A549 (cell line): ENCODE measurements at regions of chr3 and their contacts with region 1.

Region 1: GRCh38 chr3:150721285-150722130 is 17.8 kb upstream of the ERICH6 start:
- DNase-seq: peak; percentile 65 to 75
- ATAC-seq: peak; percentile 71 to 86; a peak in 5 of 6 replicates
- H3K4me3 ChIP-seq: no peak overlapping the region
- H3K27ac ChIP-seq: no peak overlapping the region
- H3K4me1 ChIP-seq: no peaks in the 10 kb centered on the region; the same call in 2 of the 3 replicates
- CTCF ChIP-seq: peak; percentile 85
- EP300 ChIP-seq: no peak
- POLR2A ChIP-seq: no peak
- RAD21 ChIP-seq: peak; percentile 84 to 89

Region 2: DNA sequence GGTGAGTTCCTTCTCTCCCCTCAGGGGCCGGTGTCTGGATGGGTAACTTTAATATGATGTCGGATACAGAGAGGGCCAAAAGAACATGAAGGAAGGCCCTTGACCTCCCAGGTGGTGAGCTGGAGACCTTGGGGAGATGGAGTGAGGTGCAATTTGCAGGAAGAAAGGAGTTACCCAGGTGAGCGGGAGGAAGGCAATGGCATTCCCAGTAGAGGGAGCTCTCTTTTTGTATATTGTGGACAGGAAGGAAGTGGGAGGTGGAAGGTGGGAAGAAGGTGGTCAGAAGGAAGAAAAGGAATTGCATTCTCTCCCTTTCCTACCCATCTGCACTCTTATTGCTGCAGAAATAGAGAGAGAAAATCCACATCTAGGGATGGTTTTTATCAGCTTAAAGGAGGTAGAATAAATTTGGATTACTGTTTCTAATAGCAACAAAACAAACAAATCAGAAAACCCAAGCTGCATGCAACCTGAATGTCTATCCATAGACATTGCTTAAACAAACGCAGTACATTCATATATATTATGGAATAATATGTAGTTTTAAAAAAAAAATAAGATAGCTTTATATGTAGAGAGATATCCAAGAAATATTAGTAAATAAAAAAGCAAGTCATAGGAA is 482.4 kb before region 1 on chr3:
- CTCF ChIA-PET with region 1: no interaction called
- POLR2A ChIA-PET with region 1: no interaction called
- DNase-seq: peak; percentile 41 to 68
- ATAC-seq: peak; percentile 77 to 94; a peak in 3 of 6 replicates
- H3K4me3 ChIP-seq: no peak overlapping the region
- H3K27ac ChIP-seq: no peak overlapping the region
- H3K4me1 ChIP-seq: peaks cover 6% of the 10 kb centered on the region; the same call in 1 of the 3 replicates
- CTCF ChIP-seq: peak; percentile 83
- EP300 ChIP-seq: no peak
- POLR2A ChIP-seq: no peak
- RAD21 ChIP-seq: peak; percentile 88 to 93

Region 3: DNA sequence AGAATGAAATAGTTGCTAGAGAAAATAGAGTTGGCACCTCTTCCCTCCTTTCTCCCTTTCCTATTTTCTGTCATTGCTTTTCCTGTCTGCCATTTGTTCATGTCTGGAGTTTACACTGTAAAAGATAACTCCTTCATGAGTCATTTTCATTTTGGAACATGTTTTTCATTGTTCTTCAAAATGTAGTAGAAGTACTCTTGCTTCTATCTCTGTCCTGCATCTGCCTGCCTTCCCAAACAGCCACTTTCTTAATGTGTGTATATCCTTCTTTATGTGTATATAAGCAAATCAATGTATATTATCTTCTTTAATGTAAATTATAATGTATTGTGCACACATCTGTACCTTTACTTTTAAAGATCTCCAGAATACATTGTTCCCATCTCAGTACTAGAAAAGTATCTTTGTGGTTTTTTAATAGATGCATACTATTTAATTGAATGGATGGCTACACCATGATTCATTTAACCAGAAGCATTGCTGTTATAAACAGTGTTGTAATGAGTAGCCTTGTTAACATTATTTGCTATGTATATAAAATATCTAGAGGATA is 272.3 kb before region 1 on chr3:
- CTCF ChIA-PET with region 1: no interaction called
- POLR2A ChIA-PET with region 1: no interaction called
- DNase-seq: no peak
- ATAC-seq: peak in 1 of 2 experiments; percentile 43; a peak in 2 of 6 replicates
- H3K4me3 ChIP-seq: no peak overlapping the region
- H3K27ac ChIP-seq: no peak overlapping the region
- H3K4me1 ChIP-seq: peaks cover 54% of the 10 kb centered on the region
- CTCF ChIP-seq: no peak
- EP300 ChIP-seq: no peak
- POLR2A ChIP-seq: no peak
- RAD21 ChIP-seq: no peak

Region 4: GRCh38 chr3:150666167-150666566 is 55.3 kb before region 1 on chr3:
- CTCF ChIA-PET with region 1: no interaction called
- POLR2A ChIA-PET with region 1: no interaction called
- DNase-seq: no peak
- ATAC-seq: no peak
- H3K4me3 ChIP-seq: no peak overlapping the region
- H3K27ac ChIP-seq: no peak overlapping the region
- H3K4me1 ChIP-seq: no peaks in the 10 kb centered on the region
- CTCF ChIP-seq: no peak
- EP300 ChIP-seq: no peak
- POLR2A ChIP-seq: no peak
- RAD21 ChIP-seq: no peak

Region 5: GRCh38 chr3:150703299-150704134 is 18.0 kb before region 1 on chr3 and contains the start of gene ERICH6:
- CTCF ChIA-PET with region 1: interaction called, 19 read pairs
- POLR2A ChIA-PET with region 1: interaction called, 8 read pairs
- DNase-seq: peak; percentile 91 to 92
- ATAC-seq: peak; percentile 98 to 99
- H3K4me3 ChIP-seq: peak within 1 kb of the TSS; percentile 65
- H3K27ac ChIP-seq: peak within 1 kb of the TSS; percentile 79 to 91
- H3K4me1 ChIP-seq: peaks cover 3% of the 10 kb centered on the region; the same call in 1 of the 3 replicates
- CTCF ChIP-seq: no peak
- EP300 ChIP-seq: no peak
- POLR2A ChIP-seq: peak; percentile 29; the same call in 1 of the 2 replicates
- RAD21 ChIP-seq: no peak
- polyA plus RNA-seq, gene ERICH6: 0.06 and 0.07 TPM in 2 replicates

Region 6: GRCh38 chr3:150861851-150862250 is 140.3 kb after region 1 on chr3:
- CTCF ChIA-PET with region 1: interaction called, 14 read pairs
- POLR2A ChIA-PET with region 1: no interaction called
- DNase-seq: no peak
- ATAC-seq: no peak
- H3K4me3 ChIP-seq: no peak overlapping the region
- H3K27ac ChIP-seq: no peak overlapping the region
- H3K4me1 ChIP-seq: no peaks in the 10 kb centered on the region
- CTCF ChIP-seq: no peak
- EP300 ChIP-seq: no peak
- POLR2A ChIP-seq: no peak
- RAD21 ChIP-seq: no peak

Region 7: GRCh38 chr3:150870396-150870795 is 148.9 kb after region 1 on chr3:
- CTCF ChIA-PET with region 1: interaction called, 14 read pairs
- POLR2A ChIA-PET with region 1: no interaction called
- DNase-seq: no peak
- ATAC-seq: no peak
- H3K4me3 ChIP-seq: no peak overlapping the region
- H3K27ac ChIP-seq: no peak overlapping the region
- H3K4me1 ChIP-seq: no peaks in the 10 kb centered on the region
- CTCF ChIP-seq: no peak
- EP300 ChIP-seq: no peak
- POLR2A ChIP-seq: no peak
- RAD21 ChIP-seq: no peak

Region 8: DNA sequence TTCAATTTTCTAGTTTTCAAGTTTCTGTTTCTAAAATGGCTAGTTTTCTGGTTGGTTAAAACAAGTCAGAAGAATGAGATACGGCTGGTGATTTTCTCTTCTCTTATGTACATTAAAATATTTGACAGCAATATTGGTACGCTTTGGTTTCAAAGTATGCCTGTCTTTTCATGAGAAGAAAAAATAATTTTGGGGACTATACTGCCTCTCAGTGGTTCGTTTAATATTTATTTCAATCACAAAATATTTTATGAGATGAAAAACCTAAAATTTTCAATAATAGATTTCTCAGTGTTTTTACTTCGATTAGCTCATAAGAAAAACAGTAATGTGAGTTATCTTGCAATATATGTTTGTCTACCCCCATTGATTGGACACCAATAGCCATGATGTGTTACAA is 939.4 kb after region 1 on chr3:
- CTCF ChIA-PET with region 1: no interaction called
- POLR2A ChIA-PET with region 1: no interaction called
- DNase-seq: no peak
- ATAC-seq: no peak
- H3K4me3 ChIP-seq: no peak overlapping the region
- H3K27ac ChIP-seq: no peak overlapping the region
- H3K4me1 ChIP-seq: no peaks in the 10 kb centered on the region
- CTCF ChIP-seq: peak; percentile 26; the same call in 1 of the 3 replicates
- EP300 ChIP-seq: no peak
- POLR2A ChIP-seq: no peak
- RAD21 ChIP-seq: peak; percentile 25 to 44; a peak in 4 of 5 replicates